ENCODE measurements at regions of chr14 and their contacts with region 1.

Region 1: GRCh38 chr14:21063479-21063878 is 5.9 kb downstream of the RNASE8 start:
- DNase-seq: no peak
- H3K4me3 ChIP-seq: no peak overlapping the region
- H3K4me3 Mint-ChIP-seq: no peak overlapping the region
- H3K27ac ChIP-seq: no peak overlapping the region
- H3K27ac Mint-ChIP-seq: no peak overlapping the region
- H3K4me1 ChIP-seq: peaks cover 4% of the 10 kb centered on the region
- H3K4me1 Mint-ChIP-seq: peaks cover under 1 to 3% (median 2%) of the 10 kb centered on the region in 3 donors
- H3K27me3 ChIP-seq: peaks cover 17% of the 10 kb centered on the region
- H3K27me3 Mint-ChIP-seq: peaks cover 34 to 67% of the 10 kb centered on the region in 2 donors

Region 2: GRCh38 chr14:20317720-20318119 is 745.8 kb before region 1 on chr14:
- CTCF ChIA-PET with region 1: no interaction called
- POLR2A ChIA-PET with region 1: no interaction called
- DNase-seq: no peak
- H3K4me3 ChIP-seq: no peak overlapping the region
- H3K4me3 Mint-ChIP-seq: no peak overlapping the region
- H3K27ac ChIP-seq: no peak overlapping the region
- H3K27ac Mint-ChIP-seq: no peak overlapping the region
- H3K4me1 ChIP-seq: no peaks in the 10 kb centered on the region
- H3K4me1 Mint-ChIP-seq: peaks cover 0 to 4% (median 0%) of the 10 kb centered on the region in 3 donors
- H3K27me3 ChIP-seq: no peaks in the 10 kb centered on the region
- H3K27me3 Mint-ChIP-seq: no peaks in the 10 kb centered on the region

Region 3: GRCh38 chr14:21092273-21093011 is 29.0 kb after region 1 on chr14:
- CTCF ChIA-PET with region 1: interaction called, 68 read pairs
- POLR2A ChIA-PET with region 1: interaction called, 4 read pairs
- DNase-seq: peak; percentile 86 to 93 (median 88)
- H3K4me3 ChIP-seq: no peak overlapping the region
- H3K4me3 Mint-ChIP-seq: no peak overlapping the region
- H3K27ac ChIP-seq: no peak overlapping the region
- H3K27ac Mint-ChIP-seq: peak overlapping the region in 7 of 8 donors; percentile 52 to 94 (median 86)
- H3K4me1 ChIP-seq: peaks cover 9% of the 10 kb centered on the region
- H3K4me1 Mint-ChIP-seq: peaks cover 19 to 34% (median 23%) of the 10 kb centered on the region in 3 donors
- H3K27me3 ChIP-seq: no peaks in the 10 kb centered on the region
- H3K27me3 Mint-ChIP-seq: no peaks in the 10 kb centered on the region

Measured in CD8-positive, alpha-beta memory T cell (primary cell).